ENCODE measurements at regions of chr5 and their contacts with region 1.

Region 1: DNA sequence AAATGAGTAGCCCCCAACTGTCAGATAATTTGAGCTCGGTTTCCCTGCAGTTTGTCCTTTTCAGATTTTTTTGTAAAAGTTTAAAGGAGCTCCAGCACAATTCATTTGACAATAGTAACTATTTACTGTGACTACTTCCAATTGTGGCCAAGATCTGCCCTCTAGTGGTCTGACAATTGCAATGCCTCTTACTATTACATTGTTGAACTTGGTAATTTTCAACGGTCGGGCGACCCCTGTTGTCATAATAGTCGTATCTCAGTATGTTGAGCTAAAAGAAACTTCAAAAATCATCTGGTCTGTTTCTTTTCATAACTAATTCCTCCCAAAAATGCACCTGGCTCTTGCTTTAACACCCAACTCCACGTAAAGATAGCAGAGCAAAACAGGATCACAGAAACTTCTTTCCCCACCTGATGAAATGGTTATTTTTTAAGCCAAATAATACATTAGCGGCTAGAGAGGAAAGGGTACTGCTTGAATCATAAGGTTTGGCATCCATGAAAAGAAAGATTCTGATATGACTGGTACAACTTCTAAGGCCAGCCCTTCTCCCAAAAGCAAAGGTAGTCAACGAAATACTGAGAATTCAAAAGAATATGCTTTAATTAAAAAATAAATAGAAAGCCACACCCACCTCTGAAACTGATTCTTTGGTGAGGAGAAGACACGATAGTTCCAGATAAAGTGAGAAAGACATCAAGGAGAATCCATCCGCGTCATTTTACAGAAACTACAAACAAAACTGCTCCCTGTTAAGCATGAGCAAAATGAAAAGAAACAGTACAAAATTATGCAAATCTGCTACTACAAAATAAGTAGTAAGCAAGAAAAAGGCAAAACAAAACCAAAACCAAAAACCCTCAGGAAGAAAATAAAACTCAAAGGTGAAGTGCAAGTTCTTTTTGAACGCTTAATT is 76.9 kb upstream of the HTR4 start:
- DNase-seq: peak; percentile 34
- H3K4me3 ChIP-seq: no peak overlapping the region
- H3K27me3 ChIP-seq: no peaks in the 10 kb centered on the region; the same call in 1 of the 2 replicates
- CTCF ChIP-seq: peak; percentile 93

Region 2: GRCh38 chr5:148179234-148179824 is 551.9 kb before region 1 on chr5:
- CTCF ChIA-PET with region 1: interaction called, 16 read pairs
- POLR2A ChIA-PET with region 1: no interaction called
- DNase-seq: peak; percentile 3
- H3K4me3 ChIP-seq: no peak overlapping the region
- H3K27me3 ChIP-seq: no peaks in the 10 kb centered on the region
- CTCF ChIP-seq: peak; percentile 67

Region 3: GRCh38 chr5:148443998-148444397 is 287.2 kb before region 1 on chr5:
- CTCF ChIA-PET with region 1: interaction called, 114 read pairs
- POLR2A ChIA-PET with region 1: no interaction called
- DNase-seq: peak; percentile 11
- H3K4me3 ChIP-seq: no peak overlapping the region
- H3K27me3 ChIP-seq: no peaks in the 10 kb centered on the region
- CTCF ChIP-seq: peak; percentile 71

Region 4: GRCh38 chr5:148719605-148720004 is 11.6 kb before region 1 on chr5:
- CTCF ChIA-PET with region 1: interaction called, 30 read pairs
- POLR2A ChIA-PET with region 1: no interaction called
- DNase-seq: no peak
- H3K4me3 ChIP-seq: no peak overlapping the region
- H3K27me3 ChIP-seq: peaks cover 10% of the 10 kb centered on the region
- CTCF ChIP-seq: no peak

Region 5: GRCh38 chr5:148998174-148998797 is 267.1 kb after region 1 on chr5:
- CTCF ChIA-PET with region 1: interaction called, 58 read pairs
- POLR2A ChIA-PET with region 1: no interaction called
- DNase-seq: no peak
- H3K4me3 ChIP-seq: no peak overlapping the region
- H3K27me3 ChIP-seq: no peaks in the 10 kb centered on the region
- CTCF ChIP-seq: peak; percentile 61

Region 6: GRCh38 chr5:149114403-149115312 is 383.5 kb after region 1 on chr5:
- CTCF ChIA-PET with region 1: interaction called, 269 read pairs
- POLR2A ChIA-PET with region 1: no interaction called
- DNase-seq: no peak
- H3K4me3 ChIP-seq: no peak overlapping the region
- H3K27me3 ChIP-seq: no peaks in the 10 kb centered on the region
- CTCF ChIP-seq: peak; percentile 87